ENCODE measurements at regions of chr17 and their contacts with region 1.

Region 1: GRCh38 chr17:75109407-75110233 is at the start of gene ARMC7:
- DNase-seq: peak; percentile 95
- ATAC-seq: peak; percentile 92
- total RNA-seq, gene ARMC7: 6.4 TPM

Region 2: GRCh38 chr17:75077496-75078283 is 31.9 kb before region 1 on chr17:
- intact Hi-C with region 1: no loop called
- DNase-seq: peak; percentile 91
- ATAC-seq: peak; percentile 91

Region 3: GRCh38 chr17:75131280-75132017 is 21.8 kb after region 1 on chr17 and contains the start of gene NT5C:
- intact Hi-C with region 1: loop called (anchors 2 kb)
- DNase-seq: peak; percentile 93
- ATAC-seq: peak; percentile 93
- total RNA-seq, gene NT5C: 24.6 TPM

Region 4: DNA sequence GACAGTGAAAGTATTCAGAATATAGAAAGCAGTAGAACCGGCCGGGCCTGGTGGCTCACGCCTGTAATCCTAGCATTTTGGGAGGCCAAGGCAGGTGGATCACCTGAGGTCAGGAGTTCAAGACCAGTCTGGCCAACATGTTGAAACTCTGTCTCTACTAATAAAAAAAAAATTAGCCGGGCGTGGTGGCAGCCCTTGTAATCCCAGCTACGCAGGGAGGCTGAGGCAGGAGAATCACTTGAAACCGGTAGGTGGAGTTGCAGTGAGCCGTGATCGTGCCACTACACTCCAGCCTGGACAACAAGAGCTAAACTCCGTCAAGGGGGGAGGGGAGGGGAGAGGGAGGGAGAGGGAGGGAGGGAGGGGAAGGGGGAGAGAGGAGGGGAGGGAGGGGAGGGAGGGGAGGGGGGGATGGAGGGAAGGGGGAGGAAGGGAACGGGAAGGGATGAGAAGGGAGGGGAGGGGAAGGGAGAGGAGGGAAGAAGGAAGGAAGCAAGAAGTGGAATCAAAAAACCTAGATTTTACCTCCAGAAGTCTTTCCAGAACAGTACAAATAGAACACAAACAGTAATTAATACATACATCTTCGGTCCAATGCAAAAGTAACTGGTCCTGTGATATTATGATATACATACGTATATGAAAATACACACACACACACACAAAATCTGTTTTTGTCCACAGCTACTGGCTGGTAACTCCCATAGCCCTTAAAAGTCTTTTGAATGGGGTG is 32.8 kb after region 1 on chr17:
- intact Hi-C with region 1: loop called (anchors 1 kb)
- DNase-seq: no peak
- ATAC-seq: no peak

Region 5: DNA sequence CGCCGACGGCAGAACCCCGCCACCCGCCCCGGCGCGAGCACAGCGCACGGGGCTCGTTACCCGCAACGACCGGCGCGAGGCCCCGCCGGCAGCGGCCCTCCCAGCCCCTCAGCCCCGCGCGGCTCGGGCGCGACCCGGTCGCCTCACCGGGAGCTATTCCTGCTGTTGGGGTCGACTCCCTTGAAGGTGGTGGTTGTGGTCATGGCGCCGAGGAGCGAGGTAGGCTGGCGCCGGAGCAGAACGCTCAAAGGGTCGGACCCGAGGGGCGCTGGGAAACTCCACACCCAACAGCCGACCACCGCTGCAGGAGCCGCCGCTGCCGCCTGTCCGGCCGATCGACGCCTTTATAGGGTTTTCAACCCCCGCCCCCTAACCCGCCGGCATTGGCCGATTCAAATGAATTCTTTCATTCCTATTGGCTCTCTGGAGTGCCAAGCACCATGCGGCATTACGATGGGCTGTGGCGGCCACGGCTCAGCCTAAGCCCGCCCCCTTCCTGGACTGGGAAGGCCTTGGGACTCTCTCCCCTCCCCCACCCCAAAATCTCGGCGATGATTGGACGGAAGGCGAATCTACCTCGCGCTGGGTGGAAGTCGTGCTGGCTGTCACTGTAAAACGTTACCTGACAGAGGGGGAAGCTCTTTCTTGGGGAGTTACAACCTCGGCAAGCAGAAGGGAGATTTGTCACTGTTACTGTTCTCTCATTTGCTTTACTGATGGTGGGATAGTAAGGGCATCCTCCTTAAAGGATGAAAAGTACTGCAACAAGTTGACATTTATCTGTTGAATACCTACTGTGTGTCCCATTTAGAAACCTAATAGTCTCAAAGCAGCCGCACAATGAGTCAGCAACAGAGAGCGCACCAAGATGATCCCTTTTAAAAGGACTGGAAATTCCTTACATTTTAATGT is 44.8 kb after region 1 on chr17 and contains the start of gene JPT1:
- intact Hi-C with region 1: no loop called
- DNase-seq: peak; percentile 98
- ATAC-seq: peak; percentile 100
- total RNA-seq, gene JPT1: 17.1 TPM

Region 6: GRCh38 chr17:75173526-75173925 is 63.9 kb after region 1 on chr17:
- intact Hi-C with region 1: loop called (anchors 1 kb)
- DNase-seq: no peak
- ATAC-seq: no peak

Region 7: GRCh38 chr17:75199886-75200618 is 90.4 kb after region 1 on chr17:
- intact Hi-C with region 1: loop called (anchors 2 kb)
- DNase-seq: no peak
- ATAC-seq: no peak

Measured in Right ventricle myocardium inferior (tissue), 1 donor.